ENCODE measurements at regions of chr16 and their contacts with region 1.

Region 1: GRCh38 chr16:23877107-23878090 is 41.6 kb downstream of the PRKCB start:
- DNase-seq: no peak
- ATAC-seq: no peak; the same call in 2 of the 3 replicates
- H3K4me3 ChIP-seq: no peak overlapping the region
- H3K27ac ChIP-seq: peak overlapping the region; percentile 69
- H3K4me1 ChIP-seq: peaks cover 63% of the 10 kb centered on the region
- H3K27me3 ChIP-seq: no peaks in the 10 kb centered on the region
- CTCF ChIP-seq: peak; percentile 23 to 28 (median 27); a peak in 2 of 6 replicates
- EP300 ChIP-seq: no peak
- POLR2A ChIP-seq: no peak
- RAD21 ChIP-seq: peak; percentile 53

Region 2: GRCh38 chr16:23847948-23848347 is 29.5 kb before region 1 on chr16:
- CTCF ChIA-PET with region 1: interaction called, 8 read pairs
- POLR2A ChIA-PET with region 1: interaction called, 16 read pairs
- RAD21 ChIA-PET with region 1: interaction called, 54 read pairs
- SMC1A ChIA-PET with region 1: interaction called, 468 read pairs
- in situ Hi-C with region 1: no loop called
- intact Hi-C with region 1: loop called (anchors 2 kb)
- DNase-seq: no peak
- ATAC-seq: peak; percentile 60
- H3K4me3 ChIP-seq: no peak overlapping the region; the same call in 1 of the 2 replicates
- H3K27ac ChIP-seq: peak overlapping the region; percentile 52
- H3K4me1 ChIP-seq: peaks cover 59% of the 10 kb centered on the region
- H3K27me3 ChIP-seq: no peaks in the 10 kb centered on the region
- CTCF ChIP-seq: no peak
- EP300 ChIP-seq: no peak
- POLR2A ChIP-seq: no peak
- RAD21 ChIP-seq: no peak

Region 3: GRCh38 chr16:23858542-23858941 is 18.9 kb before region 1 on chr16:
- CTCF ChIA-PET with region 1: interaction called, 17 read pairs
- POLR2A ChIA-PET with region 1: interaction called, 32 read pairs
- RAD21 ChIA-PET with region 1: interaction called, 38 read pairs
- SMC1A ChIA-PET with region 1: interaction called, 468 read pairs
- in situ Hi-C with region 1: no loop called
- intact Hi-C with region 1: no loop called
- DNase-seq: no peak
- ATAC-seq: no peak
- H3K4me3 ChIP-seq: no peak overlapping the region
- H3K27ac ChIP-seq: peak overlapping the region; percentile 83
- H3K4me1 ChIP-seq: peaks cover 89% of the 10 kb centered on the region
- H3K27me3 ChIP-seq: no peaks in the 10 kb centered on the region
- CTCF ChIP-seq: no peak
- EP300 ChIP-seq: no peak
- POLR2A ChIP-seq: no peak
- RAD21 ChIP-seq: no peak

Region 4: DNA sequence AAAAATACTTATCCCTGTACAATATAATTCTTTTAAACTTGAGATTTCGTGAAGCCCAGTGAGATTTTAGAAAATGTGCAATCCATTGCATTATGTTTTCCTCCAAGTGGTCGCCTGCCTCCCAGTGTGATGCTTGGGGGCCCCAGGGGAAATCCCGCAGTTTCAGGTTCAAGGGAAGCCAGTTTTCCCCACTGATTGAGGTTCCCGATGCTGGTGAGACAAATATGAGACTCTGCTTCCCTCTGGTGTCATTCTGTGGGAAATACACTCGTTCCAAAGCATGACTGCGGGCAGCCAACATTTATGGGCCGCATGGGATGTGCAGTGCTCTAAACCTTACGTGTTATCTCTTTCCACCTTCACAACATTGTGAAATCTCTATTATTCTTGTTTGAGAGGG is 159.2 kb after region 1 on chr16:
- CTCF ChIA-PET with region 1: interaction called, 12 read pairs
- POLR2A ChIA-PET with region 1: no interaction called
- RAD21 ChIA-PET with region 1: interaction called, 9 read pairs
- SMC1A ChIA-PET with region 1: interaction called, 7 read pairs
- in situ Hi-C with region 1: no loop called
- intact Hi-C with region 1: no loop called
- DNase-seq: no peak
- ATAC-seq: peak; percentile 69
- H3K4me3 ChIP-seq: no peak overlapping the region
- H3K27ac ChIP-seq: no peak overlapping the region
- H3K4me1 ChIP-seq: peaks cover 8% of the 10 kb centered on the region
- H3K27me3 ChIP-seq: no peaks in the 10 kb centered on the region
- CTCF ChIP-seq: peak; percentile 68 to 81 (median 72); a peak in 5 of 6 replicates
- EP300 ChIP-seq: no peak
- POLR2A ChIP-seq: no peak
- RAD21 ChIP-seq: peak; percentile 88

Measured in GM12878 (cell line).